ENCODE measurements at regions of chr11 and their contacts with region 1.

Region 1: GRCh38 chr11:88421530-88421929 is 84.0 kb upstream of the CTSC start:
- DNase-seq: peak; percentile 82
- H3K4me3 ChIP-seq: no peak overlapping the region
- H3K27ac ChIP-seq: peak overlapping the region; percentile 95
- H3K4me1 ChIP-seq: peaks cover 45% of the 10 kb centered on the region
- H3K27me3 ChIP-seq: no peaks in the 10 kb centered on the region
- CTCF ChIP-seq: no peak

Region 2: GRCh38 chr11:88402192-88402715 is 19.3 kb before region 1 on chr11:
- CTCF ChIA-PET with region 1: no interaction called
- dilution Hi-C with region 1: no loop called
- in situ Hi-C with region 1: no loop called
- intact Hi-C with region 1: loop called (anchors 2 kb)
- DNase-seq: peak; percentile 90
- H3K4me3 ChIP-seq: no peak overlapping the region
- H3K27ac ChIP-seq: no peak overlapping the region
- H3K4me1 ChIP-seq: peaks cover 41% of the 10 kb centered on the region
- H3K27me3 ChIP-seq: no peaks in the 10 kb centered on the region
- CTCF ChIP-seq: no peak